ENCODE measurements at regions of chr14 and their contacts with region 1.

Region 1: DNA sequence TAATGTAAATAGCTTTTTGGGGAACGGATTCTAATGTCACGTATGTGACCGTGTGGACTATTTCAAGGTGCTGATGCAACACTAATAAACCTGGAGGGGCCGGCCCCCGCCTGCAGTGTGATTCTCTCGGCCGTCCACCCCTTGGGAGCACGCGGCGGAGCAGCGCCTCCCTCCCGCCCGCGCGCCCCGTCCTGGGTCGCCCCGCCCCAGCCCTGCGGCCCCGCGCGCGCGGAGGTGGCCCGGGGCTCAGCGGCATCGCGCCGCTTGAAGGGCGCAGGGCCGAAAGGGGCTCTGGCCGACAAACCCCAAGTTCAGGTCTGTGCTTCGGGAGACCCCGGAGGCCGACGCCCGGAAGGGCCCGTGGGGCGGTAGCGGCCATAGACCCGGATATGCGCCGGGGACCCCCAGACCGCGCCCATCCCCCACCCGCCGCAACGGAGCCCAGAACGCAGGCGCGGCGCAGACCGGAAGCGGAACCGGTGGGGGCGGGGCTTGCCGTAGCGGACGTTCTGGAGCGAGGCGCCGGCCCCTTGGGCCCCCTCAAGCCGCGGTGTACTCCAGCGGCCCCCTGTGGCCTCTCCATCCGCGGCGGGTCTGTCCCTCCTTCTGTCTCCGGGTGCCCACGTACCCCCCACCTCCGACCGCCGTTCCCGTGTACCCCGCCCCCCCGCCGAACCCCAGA is at the start of gene TEX22:
- DNase-seq: peak; percentile 91
- H3K4me3 Mint-ChIP-seq: peak within 1 kb of the TSS; percentile 89
- H3K27ac Mint-ChIP-seq: peak within 1 kb of the TSS; percentile 83
- H3K4me1 Mint-ChIP-seq: peaks cover 12% of the 10 kb centered on the region
- H3K27me3 Mint-ChIP-seq: no peaks in the 10 kb centered on the region
- total RNA-seq, gene TEX22: 0.83 to 0.90 TPM

Region 2: GRCh38 chr14:105363847-105364708 is 34.1 kb before region 1 on chr14:
- CTCF ChIA-PET with region 1: no interaction called
- POLR2A ChIA-PET with region 1: no interaction called
- intact Hi-C with region 1: no loop called
- DNase-seq: peak; percentile 36
- H3K4me3 Mint-ChIP-seq: no peak overlapping the region
- H3K27ac Mint-ChIP-seq: no peak overlapping the region
- H3K4me1 Mint-ChIP-seq: peaks cover 9% of the 10 kb centered on the region
- H3K27me3 Mint-ChIP-seq: peaks cover 3% of the 10 kb centered on the region

Region 3: GRCh38 chr14:105414456-105415371 is 16.5 kb after region 1 on chr14:
- CTCF ChIA-PET with region 1: interaction called, 13 read pairs
- POLR2A ChIA-PET with region 1: no interaction called
- intact Hi-C with region 1: loop called (anchors 2 kb)
- DNase-seq: peak; percentile 73
- H3K4me3 Mint-ChIP-seq: peak overlapping the region; percentile 60
- H3K27ac Mint-ChIP-seq: no peak overlapping the region
- H3K4me1 Mint-ChIP-seq: peaks cover 12% of the 10 kb centered on the region
- H3K27me3 Mint-ChIP-seq: peaks cover 16% of the 10 kb centered on the region

Measured in activated CD4-positive, alpha-beta memory T cell treated with anti-CD3 and anti-CD28 coated beads for 36 hours (primary cell).